H1 (cell line): ENCODE measurements at regions of chr9 and their contacts with region 1.

Region 1: DNA sequence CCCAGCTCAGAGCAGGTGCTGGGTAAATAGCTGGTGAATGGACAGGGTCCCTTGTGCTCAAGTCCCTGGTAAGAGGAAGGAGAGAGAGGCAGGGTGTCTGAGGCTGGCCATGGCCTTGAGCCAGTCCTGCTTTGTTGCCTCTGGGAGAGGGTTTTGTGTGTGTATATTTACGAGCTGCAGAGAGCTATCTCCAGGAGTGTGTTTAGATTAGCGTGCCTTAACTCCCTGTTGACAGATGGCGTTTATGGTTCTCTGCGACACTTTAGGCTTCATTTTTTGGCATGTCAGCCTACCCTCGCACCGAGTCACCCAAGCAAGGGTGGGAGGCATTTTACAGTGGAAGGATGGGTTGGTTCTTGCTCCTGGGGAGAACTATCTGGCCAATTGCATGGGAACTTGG is 22.2 kb downstream of the HMCN2 start:
- DNase-seq: no peak
- H3K4me3 ChIP-seq: no peak overlapping the region
- H3K27ac ChIP-seq: no peak overlapping the region
- H3K4me1 ChIP-seq: peaks cover 0 to 15% (median 7%) of the 10 kb centered on the region in 4 experiments; a peak in 5 of 7 replicates
- H3K27me3 ChIP-seq: no peaks in the 10 kb centered on the region
- CTCF ChIP-seq: no peak
- EP300 ChIP-seq: no peak
- POLR2A ChIP-seq: no peak
- RAD21 ChIP-seq: no peak

Region 2: GRCh38 chr9:130271473-130271872 is 16.3 kb before region 1 on chr9:
- CTCF ChIA-PET with region 1: interaction called, 14 read pairs
- POLR2A ChIA-PET with region 1: interaction called, 4 read pairs
- DNase-seq: no peak
- H3K4me3 ChIP-seq: no peak overlapping the region
- H3K27ac ChIP-seq: no peak overlapping the region
- H3K4me1 ChIP-seq: peaks cover 8 to 18% (median 12%) of the 10 kb centered on the region in 4 experiments
- H3K27me3 ChIP-seq: peaks cover 0 to 5% (median 4%) of the 10 kb centered on the region in 4 experiments; a peak in 6 of 7 replicates
- CTCF ChIP-seq: no peak
- EP300 ChIP-seq: no peak
- POLR2A ChIP-seq: no peak
- RAD21 ChIP-seq: no peak